ENCODE measurements at regions of chr3 and their contacts with region 1.

Region 1: DNA sequence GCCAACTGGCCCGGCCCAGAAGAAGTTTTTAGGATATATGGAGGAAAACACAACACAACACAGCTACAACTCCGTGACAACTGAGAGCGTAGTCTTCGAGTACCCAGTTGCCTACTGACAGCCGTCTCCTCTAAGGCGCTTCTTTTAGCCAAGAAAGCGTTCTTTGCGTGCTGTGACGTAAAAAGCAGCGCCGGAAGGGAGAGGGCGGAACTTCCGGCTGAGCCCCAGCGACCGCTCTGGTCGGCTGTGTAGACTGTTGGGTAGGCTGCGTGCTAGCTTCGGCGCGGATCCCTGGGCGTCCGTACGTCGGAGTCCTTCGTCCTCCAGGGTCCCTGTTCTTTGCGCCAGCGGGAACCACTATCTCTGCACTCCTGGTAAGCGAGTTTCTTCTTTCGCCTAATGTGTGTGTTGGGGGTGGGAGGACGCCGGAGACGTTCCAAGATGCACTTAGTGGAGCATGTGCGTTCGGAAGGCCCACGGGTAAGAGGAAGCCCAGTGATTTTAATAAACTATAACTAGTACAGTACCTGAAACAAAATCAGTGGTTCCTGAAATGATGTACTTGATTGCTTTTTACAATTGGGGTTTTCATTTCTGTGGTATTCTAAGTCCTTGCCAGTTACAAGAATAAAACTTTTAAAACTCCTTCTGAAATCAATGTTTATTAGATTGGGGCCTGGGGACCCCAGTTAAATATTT is at the start of gene TRMT10C:
- DNase-seq: peak; percentile 97
- H3K4me3 ChIP-seq: peak within 1 kb of the TSS; percentile 63 to 87 (median 74)
- H3K27ac ChIP-seq: peak within 1 kb of the TSS; percentile 85 to 91 (median 88)
- H3K4me1 ChIP-seq: peaks cover 13 to 34% (median 31%) of the 10 kb centered on the region in 4 donors
- H3K27me3 ChIP-seq: peaks cover 0 to 23% (median 0%) of the 10 kb centered on the region in 4 donors
- CTCF ChIP-seq: no peak
- EP300 ChIP-seq: no peak
- POLR2A ChIP-seq: peak; percentile 49
- total RNA-seq, gene TRMT10C: 14.4 to 21.7 (median 17.3) TPM

Region 2: GRCh38 chr3:101466465-101467309 is 95.1 kb before region 1 on chr3:
- intact Hi-C with region 1: no loop called
- DNase-seq: no peak
- H3K4me3 ChIP-seq: no peak overlapping the region
- H3K27ac ChIP-seq: no peak overlapping the region
- H3K4me1 ChIP-seq: peaks cover 0 to 14% (median 0%) of the 10 kb centered on the region in 4 donors
- H3K27me3 ChIP-seq: no peaks in the 10 kb centered on the region
- CTCF ChIP-seq: no peak
- EP300 ChIP-seq: no peak
- POLR2A ChIP-seq: no peak

Region 3: DNA sequence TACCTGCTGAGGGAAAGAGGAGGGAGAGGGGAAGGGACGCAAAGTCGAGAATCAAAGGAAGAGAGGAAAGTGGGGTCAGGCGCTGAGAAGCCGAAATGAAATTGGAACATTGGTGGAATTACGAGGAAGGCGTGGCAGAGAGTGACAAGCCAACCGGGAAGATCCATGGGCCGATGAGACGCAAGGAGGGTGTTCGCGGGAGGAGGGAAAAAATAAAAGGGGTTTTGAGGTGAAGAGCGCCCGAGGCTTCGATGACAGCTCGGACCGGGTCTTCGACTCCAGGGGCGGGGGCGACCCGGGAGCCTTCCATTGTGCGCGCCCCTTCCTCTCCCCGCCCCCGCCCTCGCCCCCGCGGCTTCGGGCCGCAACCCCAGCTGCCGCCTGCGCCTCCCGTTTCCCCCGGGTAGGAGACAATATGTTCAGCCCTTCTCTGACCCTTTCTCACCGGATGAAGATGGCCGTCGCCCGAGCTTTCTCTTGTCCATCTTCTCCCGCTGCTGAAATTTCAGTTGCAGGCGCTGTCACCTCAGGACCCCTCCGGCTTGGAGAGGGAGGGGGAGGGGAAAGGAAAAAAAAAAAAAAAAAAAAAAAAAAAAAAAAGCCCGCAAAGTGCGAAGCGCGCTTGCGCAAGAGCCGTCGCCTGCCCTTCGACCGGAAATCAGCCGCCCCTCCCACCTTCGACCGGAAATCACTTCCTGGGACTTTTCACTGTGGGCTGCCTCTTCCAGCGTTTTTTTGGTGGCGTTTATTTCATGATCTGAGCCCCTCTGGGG is 48.9 kb before region 1 on chr3 and contains the start of gene SENP7:
- intact Hi-C with region 1: loop called (anchors 5 kb)
- DNase-seq: peak; percentile 94
- H3K4me3 ChIP-seq: peak within 1 kb of the TSS; percentile 73 to 97 (median 91)
- H3K27ac ChIP-seq: peak within 1 kb of the TSS; percentile 86 to 97 (median 96)
- H3K4me1 ChIP-seq: peaks cover 17 to 34% (median 26%) of the 10 kb centered on the region in 4 donors
- H3K27me3 ChIP-seq: peaks cover 0 to 12% (median 0%) of the 10 kb centered on the region in 4 donors
- CTCF ChIP-seq: no peak
- EP300 ChIP-seq: no peak
- POLR2A ChIP-seq: no peak
- total RNA-seq, gene SENP7: 13.7 to 23.3 (median 15.9) TPM

Region 4: DNA sequence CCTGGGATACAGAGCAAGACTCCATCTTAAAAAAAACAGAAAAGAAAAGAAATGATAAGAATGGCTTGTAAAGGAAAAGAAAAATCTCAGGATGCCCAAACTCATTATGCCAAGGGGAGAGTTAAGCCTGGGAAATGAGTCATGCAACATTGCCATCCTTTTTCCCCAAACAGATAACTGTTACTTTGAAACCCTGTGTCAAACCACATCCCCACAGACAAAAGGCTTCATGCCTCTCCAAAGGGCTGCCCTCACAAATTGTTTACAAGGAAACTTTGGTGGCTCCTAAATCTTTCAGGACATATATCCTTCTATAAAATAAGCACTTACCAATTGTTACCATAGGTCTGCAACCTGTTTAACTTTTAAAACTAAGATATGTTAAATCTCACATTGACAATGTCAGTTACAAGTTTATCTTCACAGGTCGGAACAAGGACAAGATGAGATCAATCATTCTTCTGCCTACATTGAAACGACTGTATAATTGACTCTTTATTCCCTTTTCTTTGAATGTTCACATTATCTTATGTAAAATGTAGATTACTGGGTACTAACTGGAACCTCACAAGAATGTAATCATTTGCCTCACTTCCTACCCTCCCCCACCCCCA is 30.2 kb before region 1 on chr3:
- intact Hi-C with region 1: no loop called
- DNase-seq: no peak
- H3K4me3 ChIP-seq: no peak overlapping the region
- H3K27ac ChIP-seq: no peak overlapping the region
- H3K4me1 ChIP-seq: no peaks in the 10 kb centered on the region
- H3K27me3 ChIP-seq: no peaks in the 10 kb centered on the region
- CTCF ChIP-seq: no peak
- EP300 ChIP-seq: no peak
- POLR2A ChIP-seq: no peak

Measured in esophagus muscularis mucosa (tissue), 4 donors.